ENCODE measurements at regions of chr11 and their contacts with region 1.

Region 1: GRCh38 chr11:116732271-116733042 is 40.3 kb downstream of the BUD13 start:
- DNase-seq: no peak
- H3K4me3 ChIP-seq: no peak overlapping the region
- CTCF ChIP-seq: peak; percentile 95

Region 2: DNA sequence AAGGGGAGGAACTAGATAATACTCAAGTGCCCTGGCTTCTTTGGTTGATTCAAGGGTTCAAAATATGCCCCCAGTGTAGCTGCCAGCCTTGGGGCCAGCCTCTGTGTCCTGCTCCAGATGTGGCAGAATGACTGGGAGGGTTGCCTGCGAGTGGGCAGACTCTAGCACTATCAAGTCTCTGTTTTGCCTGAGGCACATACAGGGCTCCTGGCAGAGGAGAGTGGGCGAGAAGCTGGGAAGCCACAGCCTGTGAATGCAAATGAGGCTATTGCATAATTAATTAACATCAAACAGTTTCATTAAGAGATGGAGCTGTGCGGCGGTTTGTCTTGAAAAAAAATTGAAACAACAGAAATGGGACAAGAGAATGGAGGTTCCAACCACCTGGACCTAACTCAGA is 10.5 kb before region 1 on chr11:
- CTCF ChIA-PET with region 1: interaction called, 38 read pairs
- POLR2A ChIA-PET with region 1: no interaction called
- DNase-seq: no peak
- H3K4me3 ChIP-seq: no peak overlapping the region
- CTCF ChIP-seq: no peak

Region 3: GRCh38 chr11:116750070-116750718 is 17.7 kb after region 1 on chr11:
- CTCF ChIA-PET with region 1: interaction called, 22 read pairs
- POLR2A ChIA-PET with region 1: no interaction called
- DNase-seq: no peak
- H3K4me3 ChIP-seq: no peak overlapping the region
- CTCF ChIP-seq: no peak

Region 4: DNA sequence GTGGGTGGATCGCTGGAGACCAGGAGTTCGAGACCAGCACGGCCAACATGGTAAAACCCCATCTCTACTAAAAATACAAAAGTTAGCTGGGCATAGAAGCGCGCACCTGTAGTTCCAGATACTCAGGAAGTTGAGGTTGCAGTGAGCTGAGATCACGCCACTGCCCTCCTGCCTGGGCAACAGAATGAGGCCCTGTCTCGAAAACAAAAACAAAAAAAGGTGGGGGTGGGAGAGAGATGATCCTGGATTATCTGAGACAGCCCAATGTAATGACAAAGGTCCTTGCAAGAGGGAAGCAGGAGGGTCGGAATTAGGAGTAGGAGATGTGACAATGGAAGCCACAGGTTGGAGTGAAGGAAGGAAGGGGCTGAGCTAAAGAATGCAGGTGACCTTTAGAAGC is 192.6 kb after region 1 on chr11:
- CTCF ChIA-PET with region 1: no interaction called
- POLR2A ChIA-PET with region 1: no interaction called
- DNase-seq: no peak
- H3K4me3 ChIP-seq: no peak overlapping the region
- CTCF ChIP-seq: no peak

Measured in AG04449 (cell line).